ENCODE measurements at regions of chr14 and their contacts with region 1.

Region 1: GRCh38 chr14:65412032-65412846 is at the start of gene FUT8:
- DNase-seq: peak; percentile 96
- H3K4me3 Mint-ChIP-seq: peak within 1 kb of the TSS; percentile 92
- H3K27ac Mint-ChIP-seq: peak within 1 kb of the TSS; percentile 96
- H3K4me1 Mint-ChIP-seq: peaks cover 44% of the 10 kb centered on the region
- H3K27me3 Mint-ChIP-seq: no peaks in the 10 kb centered on the region
- total RNA-seq, gene FUT8: 70.9 to 79.2 TPM

Region 2: GRCh38 chr14:65164068-65164824 is 248.0 kb before region 1 on chr14:
- CTCF ChIA-PET with region 1: interaction called, 10 read pairs
- POLR2A ChIA-PET with region 1: no interaction called
- DNase-seq: peak; percentile 68
- H3K4me3 Mint-ChIP-seq: no peak overlapping the region
- H3K27ac Mint-ChIP-seq: no peak overlapping the region
- H3K4me1 Mint-ChIP-seq: peaks cover 16% of the 10 kb centered on the region
- H3K27me3 Mint-ChIP-seq: no peaks in the 10 kb centered on the region

Region 3: DNA sequence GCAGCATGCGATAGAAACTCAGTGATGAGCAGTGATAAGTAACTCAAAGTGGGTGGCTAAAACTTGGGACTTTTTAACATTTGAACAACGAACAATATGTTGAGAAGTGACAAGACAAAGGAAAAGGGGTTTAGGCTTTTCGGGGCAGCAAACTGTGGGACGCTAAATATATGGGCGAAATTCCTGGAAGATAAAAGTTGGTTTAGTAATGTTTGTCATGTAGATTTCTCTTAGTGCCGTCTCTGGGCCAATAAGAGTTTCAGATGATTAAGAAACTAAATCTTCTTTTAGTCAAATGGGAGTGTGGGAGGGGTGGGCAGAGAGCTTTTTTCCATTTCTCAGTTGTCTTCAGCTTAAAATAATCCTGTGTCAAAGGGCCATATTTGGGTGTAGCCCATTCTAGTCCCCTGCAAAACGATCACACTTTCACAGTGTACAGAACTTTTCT is 41.4 kb before region 1 on chr14:
- CTCF ChIA-PET with region 1: no interaction called
- POLR2A ChIA-PET with region 1: no interaction called
- DNase-seq: no peak
- H3K4me3 Mint-ChIP-seq: no peak overlapping the region
- H3K27ac Mint-ChIP-seq: no peak overlapping the region
- H3K4me1 Mint-ChIP-seq: peaks cover 44% of the 10 kb centered on the region
- H3K27me3 Mint-ChIP-seq: no peaks in the 10 kb centered on the region

Region 4: GRCh38 chr14:65513671-65514070 is 101.4 kb after region 1 on chr14:
- CTCF ChIA-PET with region 1: no interaction called
- POLR2A ChIA-PET with region 1: no interaction called
- DNase-seq: no peak
- H3K4me3 Mint-ChIP-seq: no peak overlapping the region
- H3K27ac Mint-ChIP-seq: no peak overlapping the region
- H3K4me1 Mint-ChIP-seq: peaks cover 32% of the 10 kb centered on the region
- H3K27me3 Mint-ChIP-seq: no peaks in the 10 kb centered on the region

Measured in activated CD4-positive, alpha-beta T cell treated with anti-CD3 and anti-CD28 coated beads, Interleukin-2, amount 10 ng/mL, durations not matched to agents 7 days and 5 days (primary cell).